CD4-positive, alpha-beta T cell (primary cell): ENCODE measurements at regions of chr1 and their contacts with region 1.

Region 1: DNA sequence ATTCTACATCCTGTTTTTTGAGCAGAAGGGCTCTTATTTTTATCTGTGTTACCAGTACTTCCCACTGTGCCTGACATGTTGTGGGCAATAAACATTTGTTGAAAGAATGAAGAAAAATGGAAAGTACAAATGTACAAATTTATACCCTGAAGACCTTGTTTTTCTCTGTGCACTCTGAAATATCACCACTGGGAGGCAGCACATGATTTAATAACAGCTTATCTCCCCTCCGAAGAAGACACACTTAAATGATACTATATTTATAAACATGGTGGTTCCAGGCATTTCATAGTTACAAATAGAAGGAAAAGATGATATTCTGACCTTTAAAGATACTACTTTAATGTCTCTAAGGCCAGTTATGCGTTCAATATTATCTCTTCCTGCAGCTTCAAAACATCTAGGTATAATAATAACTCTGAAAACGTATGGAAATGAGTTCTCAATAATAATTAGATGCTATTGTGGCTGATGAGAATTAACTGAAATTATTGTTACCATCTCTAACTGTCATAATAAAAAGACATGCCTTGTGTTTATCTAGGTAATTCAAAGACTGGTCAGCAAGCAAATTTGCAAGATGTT is 12.8 kb downstream of the DYNLT5 start:
- DNase-seq: peak in 12 of 14 experiments; percentile 22 to 76 (median 44)
- ATAC-seq: peak; percentile 69
- H3K4me3 ChIP-seq: no peak overlapping the region
- H3K4me3 Mint-ChIP-seq: no peak overlapping the region
- H3K27ac ChIP-seq: no peak overlapping the region
- H3K27ac Mint-ChIP-seq: no peak overlapping the region
- H3K4me1 ChIP-seq: peaks cover 2% of the 10 kb centered on the region
- H3K4me1 Mint-ChIP-seq: peaks cover 15% of the 10 kb centered on the region
- H3K27me3 ChIP-seq: no peaks in the 10 kb centered on the region
- H3K27me3 Mint-ChIP-seq: no peaks in the 10 kb centered on the region
- CTCF ChIP-seq: peak; percentile 86

Region 2: DNA sequence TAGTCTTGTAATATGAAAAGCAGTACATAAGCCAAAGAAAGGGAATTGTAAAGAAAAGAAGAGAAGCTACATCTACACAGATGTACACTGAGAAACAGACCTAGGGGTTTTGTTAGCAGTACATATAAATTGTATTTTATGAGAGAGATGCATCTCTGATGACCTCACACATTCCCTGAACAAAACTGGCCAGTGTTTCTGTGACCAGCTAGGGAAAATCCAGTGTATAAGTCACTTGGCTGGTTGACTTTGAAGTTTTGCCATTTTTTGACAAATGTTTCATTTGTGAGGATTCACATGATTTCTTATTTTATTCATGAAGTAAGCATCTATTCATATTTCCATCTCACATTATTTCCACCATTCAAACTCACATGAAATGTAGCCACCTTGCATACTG is 41.1 kb before region 1 on chr1:
- CTCF ChIA-PET with region 1: no interaction called
- POLR2A ChIA-PET with region 1: no interaction called
- intact Hi-C with region 1: no loop called
- DNase-seq: no peak
- ATAC-seq: no peak
- H3K4me3 ChIP-seq: no peak overlapping the region
- H3K4me3 Mint-ChIP-seq: no peak overlapping the region
- H3K27ac ChIP-seq: no peak overlapping the region
- H3K27ac Mint-ChIP-seq: no peak overlapping the region
- H3K4me1 ChIP-seq: no peaks in the 10 kb centered on the region
- H3K4me1 Mint-ChIP-seq: peaks cover 13% of the 10 kb centered on the region
- H3K27me3 ChIP-seq: peaks cover 0 to 3% of the 10 kb centered on the region in 2 experiments
- H3K27me3 Mint-ChIP-seq: peaks cover 15% of the 10 kb centered on the region
- CTCF ChIP-seq: no peak

Region 3: GRCh38 chr1:66739401-66740157 is 25.5 kb before region 1 on chr1:
- CTCF ChIA-PET with region 1: no interaction called
- POLR2A ChIA-PET with region 1: no interaction called
- intact Hi-C with region 1: no loop called
- DNase-seq: no peak
- ATAC-seq: no peak
- H3K4me3 ChIP-seq: no peak overlapping the region
- H3K4me3 Mint-ChIP-seq: no peak overlapping the region
- H3K27ac ChIP-seq: no peak overlapping the region
- H3K27ac Mint-ChIP-seq: no peak overlapping the region
- H3K4me1 ChIP-seq: no peaks in the 10 kb centered on the region
- H3K4me1 Mint-ChIP-seq: peaks cover 5% of the 10 kb centered on the region
- H3K27me3 ChIP-seq: no peaks in the 10 kb centered on the region
- H3K27me3 Mint-ChIP-seq: no peaks in the 10 kb centered on the region
- CTCF ChIP-seq: no peak

Region 4: GRCh38 chr1:66924756-66925557 is 159.9 kb after region 1 on chr1 and contains the starts of genes DNAI4 and MIER1:
- CTCF ChIA-PET with region 1: no interaction called
- POLR2A ChIA-PET with region 1: interaction called, 15 read pairs
- intact Hi-C with region 1: loop called (anchors 5 to 10 kb)
- DNase-seq: peak; percentile 90 to 99 (median 95)
- ATAC-seq: peak; percentile 89
- H3K4me3 ChIP-seq: peak within 1 kb of the TSS; percentile 92
- H3K4me3 Mint-ChIP-seq: peak within 1 kb of the TSS; percentile 97
- H3K27ac ChIP-seq: peak within 1 kb of the TSS; percentile 95 to 99
- H3K27ac Mint-ChIP-seq: peak within 1 kb of the TSS; percentile 98
- H3K4me1 ChIP-seq: peaks cover 24% of the 10 kb centered on the region
- H3K4me1 Mint-ChIP-seq: peaks cover 67% of the 10 kb centered on the region
- H3K27me3 ChIP-seq: no peaks in the 10 kb centered on the region
- H3K27me3 Mint-ChIP-seq: no peaks in the 10 kb centered on the region
- CTCF ChIP-seq: no peak
- total RNA-seq, gene DNAI4: 5.0 to 8.8 TPM
- total RNA-seq, gene MIER1: 106 to 107 TPM

Region 5: DNA sequence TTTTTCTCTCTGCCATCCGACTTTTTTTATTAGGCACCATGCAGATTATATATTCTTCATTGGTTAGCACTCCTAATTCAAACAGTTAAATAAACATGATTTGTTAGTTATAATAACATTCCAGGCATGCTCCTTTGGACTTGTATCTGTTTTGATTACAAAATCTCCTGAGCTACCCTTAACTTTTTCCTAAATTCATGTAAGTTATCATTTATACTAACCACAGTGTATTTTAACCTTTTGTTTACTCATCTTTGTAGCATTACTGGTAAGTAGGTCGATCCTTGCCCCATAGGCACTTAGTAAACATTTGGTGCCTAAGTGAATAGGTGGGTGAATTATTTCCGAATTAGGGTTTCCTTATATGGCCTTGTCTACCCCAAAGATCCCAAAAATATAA is 203.5 kb after region 1 on chr1:
- CTCF ChIA-PET with region 1: no interaction called
- POLR2A ChIA-PET with region 1: no interaction called
- intact Hi-C with region 1: loop called in 1 of 2 experiments (anchors 10 kb)
- DNase-seq: no peak
- ATAC-seq: no peak
- H3K4me3 ChIP-seq: no peak overlapping the region
- H3K4me3 Mint-ChIP-seq: no peak overlapping the region
- H3K27ac ChIP-seq: no peak overlapping the region
- H3K27ac Mint-ChIP-seq: no peak overlapping the region
- H3K4me1 ChIP-seq: no peaks in the 10 kb centered on the region
- H3K4me1 Mint-ChIP-seq: peaks cover 43% of the 10 kb centered on the region
- H3K27me3 ChIP-seq: no peaks in the 10 kb centered on the region
- H3K27me3 Mint-ChIP-seq: no peaks in the 10 kb centered on the region
- CTCF ChIP-seq: no peak

Region 6: DNA sequence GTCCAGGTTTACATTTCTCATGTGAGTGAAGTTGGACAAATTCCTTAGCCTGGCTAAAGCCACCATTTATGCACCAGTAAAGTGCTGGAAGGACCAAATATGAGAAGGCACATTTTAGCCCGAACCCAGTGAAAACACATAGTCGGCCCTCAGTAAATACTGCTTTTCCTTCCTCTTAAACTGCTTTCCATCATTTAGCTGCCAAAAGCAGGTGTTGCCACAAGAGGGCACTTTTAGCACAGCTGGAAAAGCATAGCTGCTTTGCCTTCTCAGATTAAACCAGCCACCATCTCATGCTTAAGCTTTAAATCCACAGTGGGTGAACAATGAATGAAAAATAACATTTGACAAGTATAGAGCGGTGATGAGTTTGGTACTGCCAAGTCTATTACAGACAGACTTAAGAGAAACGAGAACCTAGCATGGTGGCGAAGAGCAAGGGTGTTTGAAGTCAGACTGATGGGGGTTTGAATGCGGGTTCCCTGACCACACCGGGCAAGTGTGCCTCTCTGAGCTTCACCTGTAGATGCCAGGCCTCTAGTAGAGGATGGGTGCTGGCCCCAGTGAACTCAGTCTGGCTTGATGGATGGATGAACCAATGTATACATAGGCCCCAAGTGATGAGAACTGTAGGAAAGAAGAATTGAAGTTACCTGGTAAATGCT is 231.1 kb after region 1 on chr1:
- CTCF ChIA-PET with region 1: interaction called, 5 read pairs
- POLR2A ChIA-PET with region 1: no interaction called
- intact Hi-C with region 1: loop called (anchors 5 to 10 kb)
- DNase-seq: peak; percentile 32 to 78 (median 52)
- ATAC-seq: peak; percentile 89
- H3K4me3 ChIP-seq: no peak overlapping the region
- H3K4me3 Mint-ChIP-seq: no peak overlapping the region
- H3K27ac ChIP-seq: no peak overlapping the region
- H3K27ac Mint-ChIP-seq: peak overlapping the region; percentile 2
- H3K4me1 ChIP-seq: peaks cover 5% of the 10 kb centered on the region
- H3K4me1 Mint-ChIP-seq: peaks cover 28% of the 10 kb centered on the region
- H3K27me3 ChIP-seq: no peaks in the 10 kb centered on the region
- H3K27me3 Mint-ChIP-seq: no peaks in the 10 kb centered on the region
- CTCF ChIP-seq: peak; percentile 73

Region 7: DNA sequence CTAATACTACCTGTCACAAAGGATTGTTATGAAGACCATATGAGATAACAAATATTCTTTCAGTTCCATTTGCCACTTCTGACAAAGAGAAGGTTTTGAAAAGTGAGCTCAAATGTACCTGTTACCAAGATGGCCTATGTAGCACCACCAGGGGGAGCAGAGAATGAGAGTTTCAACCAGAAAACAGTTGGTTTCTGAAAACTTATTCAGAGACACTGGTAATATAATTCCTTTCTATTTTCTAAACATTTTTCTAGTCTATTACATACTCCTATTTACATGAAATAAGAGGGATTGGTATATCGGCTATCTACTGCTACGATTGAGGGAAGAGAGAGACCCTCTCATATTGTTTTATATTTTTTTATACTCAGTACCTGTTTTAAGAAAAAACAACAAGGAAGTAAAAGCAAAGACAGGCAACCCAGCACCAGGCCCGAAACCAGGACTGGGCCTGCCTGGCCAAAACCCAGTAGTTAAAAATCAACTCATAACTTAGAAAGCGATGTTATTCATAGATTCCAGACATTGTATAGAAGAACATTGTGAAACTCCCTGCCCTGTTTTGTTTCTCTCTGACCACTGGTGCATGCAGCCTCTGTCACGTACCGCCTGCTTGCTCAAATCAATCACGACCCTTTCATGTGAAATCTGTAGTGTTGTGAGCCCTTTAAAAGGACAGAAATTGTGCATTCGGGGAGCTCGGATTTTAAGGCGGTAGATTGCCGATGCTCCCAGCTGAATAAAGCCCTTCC is 449.5 kb after region 1 on chr1:
- CTCF ChIA-PET with region 1: interaction called, 3 read pairs
- POLR2A ChIA-PET with region 1: no interaction called
- intact Hi-C with region 1: loop called (anchors 2 to 5 kb)
- DNase-seq: peak in 12 of 14 experiments; percentile 13 to 64 (median 31)
- ATAC-seq: peak; percentile 49
- H3K4me3 ChIP-seq: no peak overlapping the region
- H3K4me3 Mint-ChIP-seq: no peak overlapping the region
- H3K27ac ChIP-seq: no peak overlapping the region
- H3K27ac Mint-ChIP-seq: no peak overlapping the region
- H3K4me1 ChIP-seq: peaks cover 7% of the 10 kb centered on the region
- H3K4me1 Mint-ChIP-seq: peaks cover 26% of the 10 kb centered on the region
- H3K27me3 ChIP-seq: no peaks in the 10 kb centered on the region
- H3K27me3 Mint-ChIP-seq: no peaks in the 10 kb centered on the region
- CTCF ChIP-seq: peak; percentile 69

Region 8: DNA sequence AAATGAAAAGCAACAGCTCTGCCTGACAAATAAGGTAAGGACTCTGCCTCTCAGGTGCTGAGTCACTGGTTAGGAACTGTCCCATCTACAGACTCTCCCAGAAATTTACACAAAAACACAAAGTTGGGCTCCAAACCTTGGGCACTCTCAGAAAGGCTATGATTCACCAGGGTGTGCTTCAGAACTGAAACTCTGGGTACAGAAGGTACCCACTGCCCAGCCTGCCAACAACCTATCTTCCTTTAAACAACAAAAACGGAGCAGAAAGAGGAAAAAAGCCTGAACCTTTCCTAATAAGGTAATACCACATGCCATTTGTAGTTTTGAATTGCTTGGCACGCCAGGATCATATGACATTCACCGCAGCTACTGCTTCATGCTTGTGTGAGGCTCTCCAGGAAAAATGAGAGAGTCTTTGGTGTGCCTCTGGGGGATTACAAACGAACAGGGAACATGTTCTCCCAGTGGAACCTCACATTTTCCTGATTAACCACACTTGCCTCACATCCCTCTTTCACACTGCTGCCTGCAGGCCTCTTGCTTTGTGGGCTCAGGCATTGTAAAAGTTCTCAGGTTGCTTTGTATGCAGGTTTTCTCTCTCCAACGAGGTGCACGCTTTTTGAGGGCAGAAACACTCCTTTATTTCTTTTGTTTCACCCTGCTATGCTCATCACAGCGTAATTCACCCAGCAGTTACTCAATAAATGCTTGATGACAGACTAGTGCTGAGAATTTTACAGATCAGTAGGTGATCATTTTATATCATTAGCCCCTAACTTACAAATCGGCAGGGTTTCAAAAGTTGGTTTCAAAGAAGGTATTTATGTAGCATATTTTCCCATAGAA is 985.0 kb after region 1 on chr1:
- CTCF ChIA-PET with region 1: no interaction called
- POLR2A ChIA-PET with region 1: no interaction called
- intact Hi-C with region 1: loop called in 1 of 2 experiments (anchors 10 kb)
- DNase-seq: no peak
- ATAC-seq: no peak
- H3K4me3 ChIP-seq: no peak overlapping the region
- H3K4me3 Mint-ChIP-seq: no peak overlapping the region
- H3K27ac ChIP-seq: no peak overlapping the region
- H3K27ac Mint-ChIP-seq: no peak overlapping the region
- H3K4me1 ChIP-seq: no peaks in the 10 kb centered on the region
- H3K4me1 Mint-ChIP-seq: no peaks in the 10 kb centered on the region
- H3K27me3 ChIP-seq: no peaks in the 10 kb centered on the region
- H3K27me3 Mint-ChIP-seq: peaks cover 17% of the 10 kb centered on the region
- CTCF ChIP-seq: no peak